Body of pancreas (tissue), 4 donors: ENCODE measurements at regions of chr1 and their contacts with region 1.

Region 1: DNA sequence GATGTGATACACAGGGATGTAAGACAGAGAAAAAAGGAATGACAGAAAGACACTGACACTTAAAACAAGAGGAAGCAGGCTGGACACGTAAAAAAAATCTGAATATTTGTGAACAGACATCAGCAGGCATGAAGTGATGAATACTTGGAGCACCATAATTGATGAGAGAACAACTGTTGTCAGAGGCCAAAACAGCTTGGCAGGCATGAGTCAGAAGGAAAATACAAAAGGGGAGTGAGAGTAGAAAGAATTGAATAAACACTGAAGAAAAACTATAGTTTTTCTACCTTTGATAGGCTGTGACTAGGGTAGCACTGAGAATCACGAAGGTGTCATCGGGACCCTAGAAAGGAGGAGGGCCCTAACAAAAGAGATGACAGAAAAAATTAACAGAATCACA is 21.6 kb upstream of the GUCA2A start:
- DNase-seq: no peak
- ATAC-seq: no peak
- H3K4me3 ChIP-seq: no peak overlapping the region
- H3K27ac ChIP-seq: no peak overlapping the region
- H3K4me1 ChIP-seq: peaks cover 7% of the 10 kb centered on the region
- H3K27me3 ChIP-seq: no peaks in the 10 kb centered on the region
- CTCF ChIP-seq: no peak
- POLR2A ChIP-seq: no peak

Region 2: DNA sequence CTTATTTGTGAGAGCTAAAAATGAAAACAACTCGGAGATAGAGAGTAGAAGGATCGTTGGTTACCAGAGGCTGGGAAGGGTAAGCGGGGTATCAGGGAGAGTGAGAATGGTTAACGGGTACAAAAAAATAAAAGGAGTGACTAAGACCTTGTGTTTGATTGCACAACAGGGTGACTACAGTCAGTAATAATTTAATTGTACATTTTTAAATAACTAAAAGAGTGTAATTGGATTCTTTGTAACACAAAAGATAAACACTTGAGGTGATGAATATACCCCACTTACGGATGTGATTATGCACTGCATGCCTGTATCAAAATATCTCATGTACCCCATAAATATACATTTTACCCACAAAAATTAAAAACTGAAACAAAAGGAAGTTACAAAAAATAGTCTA is 119.5 kb after region 1 on chr1:
- intact Hi-C with region 1: loop called (anchors 10 kb)
- DNase-seq: no peak
- ATAC-seq: no peak
- H3K4me3 ChIP-seq: no peak overlapping the region
- H3K27ac ChIP-seq: no peak overlapping the region
- H3K4me1 ChIP-seq: no peaks in the 10 kb centered on the region
- H3K27me3 ChIP-seq: no peaks in the 10 kb centered on the region
- CTCF ChIP-seq: no peak
- POLR2A ChIP-seq: no peak